Caco-2 (cell line): ENCODE measurements at regions of chr3 and their contacts with region 1.

Region 1: DNA sequence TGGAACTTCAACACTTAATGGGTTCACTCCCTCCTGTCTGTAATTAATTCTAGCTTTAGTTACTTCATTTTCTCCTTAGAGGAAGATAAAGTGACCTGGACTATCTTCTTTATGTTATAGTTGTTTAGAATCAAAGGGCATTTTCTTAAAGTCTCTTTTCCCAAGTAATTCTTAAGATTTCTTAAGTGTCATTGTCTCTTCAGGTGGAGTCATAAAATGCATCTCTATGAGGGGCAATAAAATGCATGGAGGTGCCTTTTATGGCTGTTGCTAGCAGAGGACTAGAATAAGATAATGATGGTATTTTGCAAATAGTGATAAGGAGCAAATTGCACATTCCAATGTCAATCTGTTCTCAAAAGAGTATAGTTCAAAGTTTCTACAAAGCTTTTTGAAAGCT is 34.5 kb downstream of the CNTN4 start:
- DNase-seq: peak; percentile 58 to 69
- H3K4me3 ChIP-seq: no peak overlapping the region
- H3K4me3 Mint-ChIP-seq: peak overlapping the region; percentile 47
- H3K27ac Mint-ChIP-seq: peak overlapping the region; percentile 70
- H3K4me1 ChIP-seq: peaks cover 64% of the 10 kb centered on the region
- H3K4me1 Mint-ChIP-seq: peaks cover 57% of the 10 kb centered on the region
- H3K27me3 ChIP-seq: no peaks in the 10 kb centered on the region
- H3K27me3 Mint-ChIP-seq: no peaks in the 10 kb centered on the region
- CTCF ChIP-seq: no peak

Region 2: DNA sequence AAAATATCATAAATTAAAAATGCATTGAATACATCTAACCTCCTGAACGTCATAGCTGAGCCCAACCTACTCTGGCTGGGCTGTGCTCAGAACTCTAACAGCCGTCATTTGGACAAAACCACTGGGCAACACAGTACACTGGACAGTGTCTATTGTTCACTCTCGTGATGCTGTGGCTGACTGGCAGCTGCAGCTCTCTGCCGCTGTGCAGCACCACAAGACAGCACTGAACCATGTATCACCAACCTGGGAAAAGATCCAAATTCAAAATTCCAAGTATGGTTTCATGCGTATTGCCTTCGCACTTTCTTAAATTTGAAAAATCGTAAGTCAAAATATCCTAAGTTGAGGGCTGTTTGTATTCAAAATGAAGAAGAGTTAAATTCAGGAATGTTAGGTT is 179.6 kb before region 1 on chr3:
- CTCF ChIA-PET with region 1: no interaction called
- POLR2A ChIA-PET with region 1: no interaction called
- intact Hi-C with region 1: no loop called
- DNase-seq: no peak
- H3K4me3 ChIP-seq: no peak overlapping the region
- H3K4me3 Mint-ChIP-seq: no peak overlapping the region
- H3K27ac Mint-ChIP-seq: no peak overlapping the region
- H3K4me1 ChIP-seq: no peaks in the 10 kb centered on the region
- H3K4me1 Mint-ChIP-seq: no peaks in the 10 kb centered on the region
- H3K27me3 ChIP-seq: no peaks in the 10 kb centered on the region
- H3K27me3 Mint-ChIP-seq: peaks cover under 1% of the 10 kb centered on the region
- CTCF ChIP-seq: no peak

Region 3: DNA sequence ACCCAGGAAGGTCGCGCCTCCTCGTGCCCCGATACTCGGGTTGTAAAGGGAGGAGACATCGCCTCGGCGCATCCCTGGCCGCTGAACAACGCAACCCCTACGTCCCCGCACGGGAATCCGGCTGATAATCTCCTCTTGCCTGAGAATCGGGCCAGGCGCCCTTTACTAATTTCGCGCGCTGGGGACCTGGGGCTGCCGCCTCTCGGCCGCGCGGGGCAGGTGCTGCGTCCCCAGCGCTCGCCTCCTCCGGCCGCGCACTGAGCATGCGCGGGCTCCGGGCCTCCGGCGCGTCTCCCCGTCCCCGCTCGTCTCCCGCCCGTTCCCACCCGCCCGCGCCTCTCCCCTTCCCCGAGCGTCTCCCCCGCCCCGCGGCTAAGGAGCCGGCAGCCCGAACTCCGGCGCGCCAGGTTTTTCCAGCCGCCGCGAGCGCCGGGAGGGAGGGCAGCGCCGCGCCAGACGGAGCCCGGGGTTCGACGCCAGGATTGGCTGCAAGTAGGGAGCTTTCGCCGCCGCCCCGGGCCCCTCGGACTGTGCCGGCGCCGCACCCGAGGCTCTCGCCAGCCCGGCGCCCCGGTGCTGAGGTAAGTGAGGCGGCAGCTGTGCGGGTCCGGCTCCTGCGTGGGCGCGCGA is 34.6 kb before region 1 on chr3 and contains the start of gene CNTN4:
- CTCF ChIA-PET with region 1: no interaction called
- POLR2A ChIA-PET with region 1: no interaction called
- intact Hi-C with region 1: loop called (anchors 1 kb)
- DNase-seq: peak; percentile 85 to 86
- H3K4me3 ChIP-seq: peak within 1 kb of the TSS; percentile 71
- H3K4me3 Mint-ChIP-seq: peak within 1 kb of the TSS; percentile 99
- H3K27ac Mint-ChIP-seq: peak within 1 kb of the TSS; percentile 92
- H3K4me1 ChIP-seq: peaks cover 19% of the 10 kb centered on the region; the same call in 1 of the 2 replicates
- H3K4me1 Mint-ChIP-seq: peaks cover 8% of the 10 kb centered on the region
- H3K27me3 ChIP-seq: no peaks in the 10 kb centered on the region
- H3K27me3 Mint-ChIP-seq: no peaks in the 10 kb centered on the region
- CTCF ChIP-seq: no peak
- total RNA-seq, gene CNTN4: 51.3 and 59.7 TPM in 2 replicates

Region 4: DNA sequence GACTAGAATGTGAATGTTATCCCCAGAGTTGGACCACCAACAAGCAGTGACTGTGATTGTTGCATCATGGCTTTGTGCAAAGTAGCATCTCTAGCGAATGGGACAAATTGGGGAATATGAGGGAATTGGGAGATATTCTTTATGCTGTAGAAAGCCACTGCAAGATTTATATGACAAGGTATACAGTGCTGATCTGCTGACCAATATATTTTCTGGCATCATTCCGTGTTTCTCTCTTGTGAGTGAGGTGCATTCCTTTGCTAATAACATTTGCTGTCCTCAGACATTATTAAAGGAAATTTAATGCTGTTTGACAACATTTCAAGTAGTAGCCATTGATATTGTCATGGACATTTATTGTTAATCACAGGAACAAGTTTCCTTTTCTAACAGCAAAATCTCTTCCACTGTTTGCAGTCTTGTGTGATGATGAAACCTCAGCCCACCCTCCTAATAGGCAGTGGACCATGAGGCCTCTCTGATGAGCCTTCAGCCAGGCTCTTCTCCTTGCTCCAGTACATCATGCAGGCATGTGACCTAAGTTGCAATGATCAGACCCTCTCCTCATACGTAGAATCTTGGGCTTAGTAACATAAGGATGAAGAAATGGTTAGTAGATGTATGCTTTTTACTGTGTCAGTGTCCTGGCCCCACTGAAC is 18.4 kb before region 1 on chr3:
- CTCF ChIA-PET with region 1: no interaction called
- POLR2A ChIA-PET with region 1: no interaction called
- intact Hi-C with region 1: loop called (anchors 1 kb)
- DNase-seq: no peak
- H3K4me3 ChIP-seq: no peak overlapping the region
- H3K4me3 Mint-ChIP-seq: no peak overlapping the region
- H3K27ac Mint-ChIP-seq: peak overlapping the region; percentile 19
- H3K4me1 ChIP-seq: peaks cover 25% of the 10 kb centered on the region
- H3K4me1 Mint-ChIP-seq: peaks cover 11% of the 10 kb centered on the region
- H3K27me3 ChIP-seq: no peaks in the 10 kb centered on the region
- H3K27me3 Mint-ChIP-seq: no peaks in the 10 kb centered on the region
- CTCF ChIP-seq: no peak

Region 5: DNA sequence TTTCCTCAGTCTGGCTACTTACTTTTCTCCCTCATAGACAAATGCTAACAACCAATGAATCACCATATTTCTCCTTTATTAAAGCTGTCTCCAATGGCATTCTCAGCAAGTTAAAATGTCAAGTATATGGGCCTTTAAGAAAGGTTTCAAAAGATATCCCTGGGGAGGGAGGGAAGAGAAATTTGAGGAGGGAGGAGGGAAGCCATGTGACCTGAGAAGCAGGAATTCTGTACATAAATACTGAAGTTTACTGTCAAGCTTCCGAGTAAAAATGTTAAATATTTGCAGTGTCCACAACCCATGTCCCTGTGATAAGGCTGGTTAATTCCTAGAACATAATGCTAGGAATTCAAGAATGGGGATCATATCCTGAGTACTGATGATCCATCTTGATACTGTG is 141.4 kb after region 1 on chr3:
- CTCF ChIA-PET with region 1: no interaction called
- POLR2A ChIA-PET with region 1: no interaction called
- intact Hi-C with region 1: loop called (anchors 1 kb)
- DNase-seq: peak; percentile 46 to 51
- H3K4me3 ChIP-seq: no peak overlapping the region
- H3K4me3 Mint-ChIP-seq: no peak overlapping the region
- H3K27ac Mint-ChIP-seq: no peak overlapping the region
- H3K4me1 ChIP-seq: peaks cover 17% of the 10 kb centered on the region
- H3K4me1 Mint-ChIP-seq: peaks cover 21% of the 10 kb centered on the region
- H3K27me3 ChIP-seq: no peaks in the 10 kb centered on the region
- H3K27me3 Mint-ChIP-seq: no peaks in the 10 kb centered on the region
- CTCF ChIP-seq: no peak